HEK293T (cell line): ENCODE measurements at regions of chr11 and their contacts with region 1.

Region 1: DNA sequence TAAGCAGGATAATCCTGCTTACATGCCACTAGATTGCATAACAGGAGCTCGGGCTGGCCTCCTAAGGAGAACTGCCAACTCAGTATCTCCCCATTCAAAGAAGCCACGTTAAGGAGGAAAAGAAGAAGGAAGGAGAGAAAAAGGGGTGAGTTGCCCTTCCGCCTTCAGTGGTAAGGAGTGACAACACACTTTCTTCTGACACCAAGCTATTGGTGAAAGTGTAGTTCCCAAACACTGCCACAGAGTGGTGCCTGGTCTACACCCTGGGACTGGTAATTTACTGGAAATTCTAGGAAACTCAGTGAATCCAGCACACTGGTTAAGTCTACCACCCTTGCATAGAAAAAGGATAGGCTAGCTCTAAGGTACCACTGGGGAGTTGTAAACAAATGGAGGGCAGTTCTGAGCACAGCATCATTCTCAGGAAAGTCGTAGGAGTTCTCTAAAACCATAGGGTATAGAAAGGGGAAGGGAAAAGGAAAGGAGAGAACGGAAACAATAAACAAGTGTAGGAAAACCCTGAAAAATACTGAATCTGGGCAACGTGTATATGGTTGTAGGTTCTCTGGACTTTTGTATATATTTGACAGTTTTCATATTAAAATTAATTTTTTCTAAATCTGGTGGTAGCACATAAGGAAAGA is 58.2 kb downstream of the RRAS2 start:
- DNase-seq: peak; percentile 72

Region 2: DNA sequence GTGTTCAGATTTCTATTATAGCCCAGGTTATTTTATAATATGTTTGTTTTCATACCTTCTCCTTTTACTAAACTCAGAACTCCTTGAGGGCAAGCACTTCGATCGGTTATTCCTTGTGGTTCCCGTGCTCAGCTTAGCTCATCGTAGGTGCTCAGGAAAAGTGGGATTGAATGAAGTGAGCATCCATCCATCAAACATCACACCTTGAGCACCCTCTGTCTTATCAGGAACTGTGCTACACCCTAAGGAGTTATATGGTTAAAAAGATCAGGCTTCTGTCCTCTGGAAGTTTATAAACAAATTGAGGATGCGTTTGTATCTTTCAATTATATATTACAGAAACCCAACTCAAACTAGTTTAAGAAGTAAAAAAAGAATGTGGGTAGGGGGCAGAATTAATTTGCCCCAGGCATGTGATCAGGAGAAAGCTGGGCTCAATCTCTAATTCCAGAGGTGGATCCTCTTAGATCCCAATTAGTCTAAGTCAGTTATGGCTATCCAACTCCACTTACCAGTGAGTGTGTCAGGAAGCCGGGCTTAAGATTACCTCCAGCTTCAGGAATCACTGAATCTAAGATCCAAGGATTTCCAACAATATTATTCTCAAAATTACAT is 118.1 kb after region 1 on chr11:
- CTCF ChIA-PET with region 1: interaction called, 14 read pairs
- POLR2A ChIA-PET with region 1: no interaction called
- DNase-seq: peak; percentile 58

Region 3: GRCh38 chr11:14454861-14455632 is 154.3 kb after region 1 on chr11:
- CTCF ChIA-PET with region 1: interaction called, 20 read pairs
- POLR2A ChIA-PET with region 1: no interaction called
- DNase-seq: peak; percentile 19

Region 4: GRCh38 chr11:14544611-14545010 is 243.8 kb after region 1 on chr11:
- CTCF ChIA-PET with region 1: no interaction called
- POLR2A ChIA-PET with region 1: no interaction called
- DNase-seq: no peak